PC-3 (cell line): ENCODE measurements at regions of chr7 and their contacts with region 1.

Region 1: GRCh38 chr7:50092579-50093491 is at the start of gene ZPBP:
- DNase-seq: peak; percentile 67
- ATAC-seq: peak; percentile 45; the same call in 1 of the 2 replicates
- H3K4me3 ChIP-seq: peak within 1 kb of the TSS; percentile 51
- H3K27ac ChIP-seq: no peak within 1 kb of the TSS
- H3K4me1 ChIP-seq: no peaks in the 10 kb centered on the region
- H3K27me3 ChIP-seq: peaks cover 25% of the 10 kb centered on the region
- CTCF ChIP-seq: peak; percentile 84
- total RNA-seq, gene ZPBP: not detected in 2 replicates

Region 2: GRCh38 chr7:50359995-50360925 is 267.4 kb after region 1 on chr7:
- CTCF ChIA-PET with region 1: no interaction called
- POLR2A ChIA-PET with region 1: no interaction called
- intact Hi-C with region 1: no loop called
- DNase-seq: no peak
- ATAC-seq: no peak
- H3K4me3 ChIP-seq: no peak overlapping the region
- H3K27ac ChIP-seq: no peak overlapping the region
- H3K4me1 ChIP-seq: no peaks in the 10 kb centered on the region
- H3K27me3 ChIP-seq: peaks cover 89% of the 10 kb centered on the region
- CTCF ChIP-seq: no peak

Region 3: GRCh38 chr7:51366930-51367613 is 1274.2 kb after region 1 on chr7:
- CTCF ChIA-PET with region 1: no interaction called
- POLR2A ChIA-PET with region 1: no interaction called
- intact Hi-C with region 1: loop called (anchors 2 kb)
- DNase-seq: peak; percentile 75
- ATAC-seq: peak; percentile 96
- H3K4me3 ChIP-seq: no peak overlapping the region
- H3K27ac ChIP-seq: no peak overlapping the region
- H3K4me1 ChIP-seq: no peaks in the 10 kb centered on the region
- H3K27me3 ChIP-seq: no peaks in the 10 kb centered on the region
- CTCF ChIP-seq: peak; percentile 84